A549 (cell line): ENCODE measurements at regions of chr1 and their contacts with region 1.

Region 1: GRCh38 chr1:163315773-163316374 is 5.9 kb upstream of the NUF2 start:
- DNase-seq: peak; percentile 10 to 48
- ATAC-seq: 0 out of 6 replicates have a peak, but pooled peaks of 1 of the 2 experiments have one; percentile 31
- H3K4me3 ChIP-seq: no peak overlapping the region
- H3K27ac ChIP-seq: no peak overlapping the region
- H3K4me1 ChIP-seq: 0 out of 3 replicates have a peak, but pooled peaks cover 7% of the 10 kb centered on the region
- CTCF ChIP-seq: peak; percentile 85
- EP300 ChIP-seq: no peak
- POLR2A ChIP-seq: no peak
- RAD21 ChIP-seq: peak; percentile 76 to 82

Region 2: GRCh38 chr1:162847839-162848453 is 467.9 kb before region 1 on chr1:
- CTCF ChIA-PET with region 1: interaction called, 13 read pairs
- POLR2A ChIA-PET with region 1: no interaction called
- DNase-seq: peak; percentile 30 to 76
- ATAC-seq: peak in 1 of 2 experiments; percentile 76; a peak in 3 of 6 replicates
- H3K4me3 ChIP-seq: no peak overlapping the region
- H3K27ac ChIP-seq: no peak overlapping the region
- H3K4me1 ChIP-seq: no peaks in the 10 kb centered on the region
- CTCF ChIP-seq: peak; percentile 90
- EP300 ChIP-seq: no peak
- POLR2A ChIP-seq: no peak
- RAD21 ChIP-seq: peak; percentile 77 to 83

Region 3: DNA sequence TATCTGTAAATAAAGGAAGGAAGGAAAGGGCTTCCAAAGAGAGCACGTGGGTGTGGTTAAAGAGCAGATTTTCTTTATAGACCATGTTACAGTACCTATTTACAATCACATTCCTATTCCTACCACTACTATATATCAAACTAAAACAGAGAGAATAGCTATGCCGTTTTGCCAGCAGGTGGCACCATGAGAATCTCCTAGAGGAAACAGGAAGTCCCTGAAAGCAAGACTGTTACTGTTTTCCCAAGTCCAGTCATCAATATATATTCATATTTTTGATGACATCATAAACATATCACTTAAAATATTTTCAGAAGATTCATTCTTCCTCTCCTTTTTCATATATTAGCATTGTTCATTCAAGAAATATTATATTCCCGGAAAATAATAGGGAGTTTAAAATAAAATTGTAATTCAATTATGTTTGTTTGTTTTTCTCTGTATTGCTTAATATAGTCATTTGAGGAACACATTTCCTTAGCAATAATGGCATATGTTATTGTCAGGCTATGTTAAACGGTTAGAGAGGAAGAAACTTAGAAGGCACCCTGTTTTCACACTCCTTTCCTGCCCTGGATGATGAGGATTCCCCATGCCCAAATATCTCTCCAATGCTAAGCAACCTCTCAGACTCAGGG is 461.5 kb before region 1 on chr1:
- CTCF ChIA-PET with region 1: interaction called, 28 read pairs
- POLR2A ChIA-PET with region 1: no interaction called
- DNase-seq: peak; percentile 67 to 68
- ATAC-seq: peak; percentile 89 to 98
- H3K4me3 ChIP-seq: no peak overlapping the region
- H3K27ac ChIP-seq: no peak overlapping the region
- H3K4me1 ChIP-seq: no peaks in the 10 kb centered on the region
- CTCF ChIP-seq: peak; percentile 78
- EP300 ChIP-seq: no peak
- POLR2A ChIP-seq: no peak
- RAD21 ChIP-seq: peak; percentile 64 to 66

Region 4: GRCh38 chr1:163071405-163072255 is 244.2 kb before region 1 on chr1:
- CTCF ChIA-PET with region 1: interaction called, 28 read pairs
- POLR2A ChIA-PET with region 1: no interaction called
- DNase-seq: peak; percentile 46 to 56
- ATAC-seq: peak; percentile 87 to 94
- H3K4me3 ChIP-seq: no peak overlapping the region
- H3K27ac ChIP-seq: no peak overlapping the region
- H3K4me1 ChIP-seq: no peaks in the 10 kb centered on the region
- CTCF ChIP-seq: peak; percentile 52
- EP300 ChIP-seq: no peak
- POLR2A ChIP-seq: no peak
- RAD21 ChIP-seq: peak; percentile 49 to 50; a peak in 4 of 5 replicates

Region 5: DNA sequence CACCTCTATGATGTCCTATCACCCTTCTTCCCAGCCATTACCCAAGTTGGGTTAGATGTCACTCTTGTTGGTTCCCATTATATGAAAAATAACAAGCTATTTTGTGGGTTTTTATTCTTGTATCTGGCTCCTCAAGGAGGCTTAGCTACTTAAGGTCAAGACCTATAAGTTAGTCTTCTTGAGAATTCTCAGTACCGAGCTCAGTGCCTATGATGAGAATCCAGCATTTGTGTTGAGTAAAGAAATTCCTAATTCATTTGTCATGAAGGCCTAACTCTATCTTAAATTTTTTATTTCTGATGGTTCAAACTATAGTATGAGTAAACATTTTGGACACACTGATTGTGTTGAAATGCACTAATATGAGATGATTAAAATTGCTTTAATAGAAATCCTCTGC is 21.8 kb after region 1 on chr1:
- CTCF ChIA-PET with region 1: no interaction called
- POLR2A ChIA-PET with region 1: no interaction called
- DNase-seq: no peak
- ATAC-seq: no peak
- H3K4me3 ChIP-seq: no peak overlapping the region
- H3K27ac ChIP-seq: no peak overlapping the region
- H3K4me1 ChIP-seq: no peaks in the 10 kb centered on the region
- CTCF ChIP-seq: no peak
- EP300 ChIP-seq: no peak
- POLR2A ChIP-seq: no peak
- RAD21 ChIP-seq: no peak